Motor neuron (in vitro differentiated cells): ENCODE measurements at regions of chr22 and their contacts with region 1.

Region 1: DNA sequence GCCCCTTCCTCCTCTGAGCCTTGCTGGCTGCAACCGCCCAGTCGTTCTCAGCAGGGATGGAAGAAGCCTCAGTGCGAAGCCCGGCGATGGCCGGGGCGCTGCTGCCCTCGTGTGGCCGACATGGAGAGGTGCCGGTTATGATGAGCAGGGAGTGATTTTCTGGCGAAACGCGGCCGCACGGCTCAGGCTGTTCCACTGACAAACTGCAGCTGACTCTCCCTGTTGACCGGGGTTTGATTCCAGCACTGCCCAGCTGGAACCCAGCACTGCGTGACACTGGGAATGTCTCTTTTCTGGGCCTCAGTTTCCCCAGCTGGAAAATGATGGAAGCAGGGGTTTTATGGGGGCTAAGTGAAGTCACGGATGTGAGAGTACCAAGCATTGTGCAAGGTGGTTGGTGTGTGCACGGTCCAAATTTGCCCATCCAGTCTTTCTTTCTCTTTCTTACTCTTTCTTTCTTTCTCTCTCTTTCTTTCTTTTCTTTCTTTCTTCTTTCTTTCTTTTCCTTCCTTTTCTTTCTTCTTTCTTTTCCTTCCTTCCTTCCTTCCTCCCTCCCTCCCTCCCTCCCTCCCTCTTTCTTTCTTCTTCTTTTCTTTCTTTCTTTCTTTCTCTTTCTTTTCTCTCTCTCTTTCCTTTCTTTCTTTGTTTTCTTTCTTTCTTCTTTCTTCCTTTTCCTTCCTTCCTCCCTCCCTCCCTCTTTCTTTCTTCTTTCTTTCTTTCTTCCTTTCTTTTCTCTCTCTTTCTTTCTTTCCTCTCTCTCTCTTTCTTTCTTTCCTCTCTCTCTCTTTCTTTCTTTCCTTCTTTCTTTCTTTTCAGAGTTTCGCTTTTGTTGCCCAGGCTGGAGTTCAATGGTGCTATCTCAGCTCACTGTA is 25.8 kb upstream of the MPPED1 start:
- ATAC-seq: peak; percentile 85 to 95 (median 89)
- H3K4me3 ChIP-seq: no peak overlapping the region
- H3K27ac ChIP-seq: no peak overlapping the region
- H3K4me1 ChIP-seq: peaks cover 3 to 19% of the 10 kb centered on the region in 2 donors

Region 2: GRCh38 chr22:42937164-42937843 is 448.7 kb before region 1 on chr22:
- in situ Hi-C with region 1: no loop called
- ATAC-seq: peak in 4 of 8 experiments; percentile 13 to 68 (median 40)
- H3K4me3 ChIP-seq: no peak overlapping the region
- H3K27ac ChIP-seq: no peak overlapping the region
- H3K4me1 ChIP-seq: peaks cover 21 to 38% of the 10 kb centered on the region in 2 donors

Region 3: GRCh38 chr22:43273902-43274484 is 112.0 kb before region 1 on chr22:
- in situ Hi-C with region 1: loop called in 2 of 9 experiments (anchors 25 kb)
- ATAC-seq: peak in 4 of 8 experiments; percentile 3 to 78 (median 62)
- H3K4me3 ChIP-seq: no peak overlapping the region
- H3K27ac ChIP-seq: no peak overlapping the region
- H3K4me1 ChIP-seq: peaks cover 29 to 43% of the 10 kb centered on the region in 2 donors

Region 4: DNA sequence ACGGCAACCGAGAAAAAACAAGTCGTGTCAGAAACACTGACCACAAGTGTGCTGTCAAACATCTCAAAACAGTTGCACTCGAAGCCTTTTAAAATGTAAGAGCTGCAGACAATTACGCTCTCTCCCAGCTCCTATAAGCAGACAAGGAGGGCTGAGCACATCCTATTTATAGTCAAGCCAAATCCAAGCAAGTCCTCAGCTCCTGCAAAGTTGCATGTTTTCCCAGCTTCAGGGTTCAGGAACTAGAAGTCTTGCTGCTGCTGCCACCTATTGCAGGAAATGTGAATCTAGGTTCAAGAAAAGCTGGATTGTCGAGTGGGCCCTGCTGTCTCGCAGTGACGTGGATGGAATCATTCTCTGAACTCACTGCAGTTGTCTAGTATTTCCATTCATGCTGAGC is 410.6 kb after region 1 on chr22:
- in situ Hi-C with region 1: loop called in 3 of 9 experiments (anchors 25 kb)
- ATAC-seq: peak in 7 of 8 experiments; percentile 22 to 67 (median 57)
- H3K4me3 ChIP-seq: no peak overlapping the region
- H3K27ac ChIP-seq: no peak overlapping the region
- H3K4me1 ChIP-seq: no peaks in the 10 kb centered on the region

Region 5: DNA sequence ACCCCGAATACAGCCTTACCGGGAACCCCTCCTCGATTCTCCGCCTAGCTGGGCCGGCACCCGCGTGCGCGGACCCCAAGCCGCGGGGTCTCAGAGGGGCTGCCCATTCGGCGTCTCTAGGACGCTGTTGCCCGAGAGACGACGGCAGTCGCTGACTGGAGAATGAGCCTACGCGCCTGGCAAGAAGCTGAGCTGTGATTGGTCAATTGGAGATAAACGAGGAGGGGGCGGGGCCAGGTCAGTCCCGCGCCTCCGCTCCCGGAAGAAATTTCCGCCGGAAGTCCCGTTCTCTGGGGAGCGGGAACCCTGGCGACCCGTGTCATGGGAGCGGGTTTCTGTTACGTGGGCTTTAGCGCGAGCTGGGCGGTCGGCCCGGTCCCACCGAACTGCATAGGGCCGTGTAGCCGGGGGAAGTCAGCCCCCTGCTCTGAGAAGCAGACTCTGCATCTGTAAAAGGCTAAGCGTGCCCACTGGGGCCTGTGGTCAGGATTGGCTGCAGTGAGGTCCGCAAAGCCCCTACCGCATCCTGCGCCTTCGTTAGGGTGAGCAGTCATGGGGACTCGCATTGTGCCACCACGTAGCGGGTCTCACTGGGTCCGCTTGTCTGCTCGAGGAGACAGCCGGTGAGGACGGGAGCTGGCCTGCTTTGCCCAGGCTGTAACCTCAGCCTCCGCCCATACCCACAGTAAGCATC is 426.3 kb after region 1 on chr22 and contains the start of gene EFCAB6:
- in situ Hi-C with region 1: loop called in 2 of 9 experiments (anchors 25 kb)
- ATAC-seq: peak; percentile 93 to 96 (median 94)
- H3K4me3 ChIP-seq: peak within 1 kb of the TSS; percentile 77 to 96 (median 92)
- H3K27ac ChIP-seq: peak within 1 kb of the TSS; percentile 93 to 95
- H3K4me1 ChIP-seq: peaks cover 9 to 11% of the 10 kb centered on the region in 2 donors
- total RNA-seq, gene EFCAB6: 1.0 to 9.2 (median 2.5) TPM

Region 6: GRCh38 chr22:43826142-43827002 is 440.4 kb after region 1 on chr22:
- in situ Hi-C with region 1: loop called in 3 of 9 experiments (anchors 25 kb)
- ATAC-seq: peak; percentile 44 to 85 (median 81)
- H3K4me3 ChIP-seq: no peak overlapping the region
- H3K27ac ChIP-seq: peak overlapping the region; percentile 33 to 57
- H3K4me1 ChIP-seq: peaks cover 40 to 52% of the 10 kb centered on the region in 2 donors

Region 7: DNA sequence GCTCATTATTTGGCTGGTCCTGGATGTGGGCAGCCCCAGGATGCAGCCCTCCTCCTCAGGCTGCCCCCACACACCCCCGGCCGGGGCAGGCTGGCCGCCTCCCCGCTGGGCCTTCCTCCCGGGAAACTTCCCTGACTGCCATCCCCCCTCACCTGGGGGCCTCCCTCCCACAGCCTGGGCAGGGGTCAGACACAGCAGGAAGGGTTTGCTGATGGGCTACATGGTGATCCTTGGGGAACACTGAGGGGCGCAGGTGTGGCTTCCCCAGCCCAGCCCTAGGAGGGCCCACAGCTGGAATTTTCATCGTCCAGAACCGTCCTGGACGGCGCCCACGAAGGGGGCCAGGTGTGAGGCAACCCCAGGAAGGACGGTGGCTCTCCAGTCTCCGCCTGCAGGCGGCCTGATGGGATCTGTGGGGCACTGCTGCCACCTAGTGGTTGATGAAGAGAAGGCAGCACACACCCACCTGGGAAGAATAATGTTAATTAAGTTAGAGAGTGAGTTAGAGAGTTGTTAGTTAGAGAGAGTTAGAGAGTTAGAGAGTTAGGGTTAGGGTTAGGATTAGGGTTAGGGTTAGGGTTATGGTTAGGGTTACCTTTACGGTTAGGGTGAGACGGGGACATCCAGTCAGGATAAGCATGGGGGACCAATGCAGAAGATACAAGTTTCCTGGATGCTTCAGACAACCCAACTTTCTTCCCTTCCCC is 1240.1 kb after region 1 on chr22:
- in situ Hi-C with region 1: loop called in 1 of 9 experiments (anchors 25 kb)
- ATAC-seq: peak; percentile 41 to 88 (median 51)
- H3K4me3 ChIP-seq: no peak overlapping the region
- H3K27ac ChIP-seq: no peak overlapping the region
- H3K4me1 ChIP-seq: peaks cover 24 to 39% of the 10 kb centered on the region in 2 donors